OCI-LY7 (cell line): ENCODE measurements at regions of chr15 and their contacts with region 1.

Region 1: GRCh38 chr15:63436872-63437375 is 55.3 kb upstream of the CA12 start:
- DNase-seq: no peak
- H3K4me3 ChIP-seq: no peak overlapping the region
- H3K27ac ChIP-seq: no peak overlapping the region
- H3K4me1 ChIP-seq: no peaks in the 10 kb centered on the region
- CTCF ChIP-seq: no peak

Region 2: DNA sequence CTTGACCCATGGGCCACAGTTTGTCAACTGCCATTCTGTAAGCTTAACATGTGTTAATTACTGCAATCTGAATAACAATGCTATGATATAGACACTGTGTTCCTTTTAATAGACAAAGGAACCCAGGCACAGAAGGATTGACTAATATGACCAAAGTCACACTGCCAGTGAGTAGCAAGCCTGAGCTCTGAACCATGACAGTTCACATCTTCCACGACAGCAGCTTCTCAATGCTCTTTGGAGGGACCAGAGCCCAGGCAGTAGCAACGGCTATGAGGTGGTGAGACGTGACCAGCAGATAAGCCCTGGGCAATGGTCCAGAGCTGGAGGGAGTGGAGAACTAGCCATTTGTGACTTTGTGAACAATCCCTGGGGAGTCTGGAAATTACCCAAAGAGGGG is 74.7 kb before region 1 on chr15:
- CTCF ChIA-PET with region 1: no interaction called
- POLR2A ChIA-PET with region 1: no interaction called
- intact Hi-C with region 1: loop called (anchors 5 kb)
- DNase-seq: no peak
- H3K4me3 ChIP-seq: no peak overlapping the region
- H3K27ac ChIP-seq: no peak overlapping the region
- H3K4me1 ChIP-seq: no peaks in the 10 kb centered on the region
- CTCF ChIP-seq: no peak